Activated naive CD4-positive, alpha-beta T cell treated with anti-CD3 and anti-CD28 coated beads for 36 hours (primary cell): ENCODE measurements at regions of chr5 and their contacts with region 1.

Region 1: DNA sequence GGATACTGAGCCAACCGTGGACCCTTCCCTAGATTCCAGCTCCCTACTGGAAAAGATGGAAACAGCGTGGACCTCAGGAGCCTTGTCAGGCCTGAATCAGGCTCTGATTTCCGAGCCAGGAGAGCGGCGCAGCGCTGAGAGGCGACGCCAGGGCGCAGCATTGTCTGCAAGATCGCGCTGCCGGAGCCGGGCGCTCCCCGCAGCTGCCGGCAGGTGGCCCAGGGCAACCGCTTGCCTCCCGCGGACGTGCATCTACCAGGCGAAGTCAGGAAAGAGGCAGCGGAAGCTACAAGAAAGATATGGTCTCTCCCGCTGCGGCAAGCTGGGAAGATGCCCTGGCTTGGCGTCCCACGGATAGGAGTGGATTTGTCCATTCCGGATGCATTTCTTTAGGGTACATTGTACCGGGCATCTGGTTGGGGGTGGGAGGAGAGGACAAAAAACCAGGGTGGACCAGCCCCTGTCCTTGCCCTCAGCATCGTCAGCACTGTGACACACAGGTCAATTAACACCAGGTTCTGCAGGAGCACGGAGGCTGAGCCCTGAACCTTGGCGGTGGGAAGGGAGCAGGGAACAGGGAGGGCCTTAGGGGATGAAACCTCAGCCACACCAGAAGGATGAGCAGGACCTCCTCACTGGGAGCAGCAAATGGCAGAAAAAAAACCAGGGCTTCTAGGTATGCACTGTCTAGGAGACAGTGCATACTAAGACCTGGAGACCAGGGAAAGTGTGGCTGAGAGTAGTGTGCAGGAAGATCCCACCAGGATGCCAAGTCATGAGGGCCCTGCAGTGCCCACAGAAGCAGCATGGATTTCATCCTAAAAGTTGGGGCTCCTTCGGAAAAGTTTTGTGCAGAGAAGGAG is 55.9 kb downstream of the SFXN1 start:
- DNase-seq: peak; percentile 92
- H3K4me3 Mint-ChIP-seq: peak overlapping the region; percentile 68
- H3K27ac Mint-ChIP-seq: peak overlapping the region; percentile 77
- H3K4me1 Mint-ChIP-seq: peaks cover 54% of the 10 kb centered on the region
- H3K27me3 Mint-ChIP-seq: no peaks in the 10 kb centered on the region

Region 2: DNA sequence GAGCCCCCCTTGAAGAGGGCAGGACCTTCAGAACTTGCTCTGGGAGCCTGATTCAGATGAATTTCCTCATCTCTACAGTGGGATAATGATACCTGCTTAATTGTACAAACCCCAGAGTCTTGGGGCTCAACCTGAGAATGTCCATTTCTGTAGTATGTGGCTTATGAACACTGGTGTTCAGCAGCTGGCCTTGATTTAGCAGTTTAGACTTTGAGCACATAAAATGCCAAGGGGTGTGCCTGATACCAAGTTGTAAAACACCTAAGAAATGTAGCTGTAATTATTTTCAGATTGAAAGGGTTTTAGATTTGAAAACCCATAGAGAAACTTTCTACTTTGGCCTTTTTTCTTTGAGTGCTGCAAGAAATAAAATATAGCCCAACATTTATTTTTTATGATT is 11.0 kb before region 1 on chr5:
- CTCF ChIA-PET with region 1: interaction called, 23 read pairs
- intact Hi-C with region 1: loop called (anchors 1 kb)
- DNase-seq: no peak
- H3K4me3 Mint-ChIP-seq: peak overlapping the region; percentile 91
- H3K27ac Mint-ChIP-seq: peak overlapping the region; percentile 99
- H3K4me1 Mint-ChIP-seq: peaks cover 74% of the 10 kb centered on the region
- H3K27me3 Mint-ChIP-seq: no peaks in the 10 kb centered on the region

Region 3: GRCh38 chr5:175603987-175604739 is 69.9 kb after region 1 on chr5:
- CTCF ChIA-PET with region 1: interaction called, 12 read pairs
- intact Hi-C with region 1: no loop called
- DNase-seq: no peak
- H3K4me3 Mint-ChIP-seq: no peak overlapping the region
- H3K27ac Mint-ChIP-seq: no peak overlapping the region
- H3K4me1 Mint-ChIP-seq: peaks cover 6% of the 10 kb centered on the region
- H3K27me3 Mint-ChIP-seq: no peaks in the 10 kb centered on the region

Region 4: GRCh38 chr5:175689147-175689991 is 155.1 kb after region 1 on chr5:
- CTCF ChIA-PET with region 1: interaction called, 111 read pairs
- intact Hi-C with region 1: no loop called
- DNase-seq: no peak
- H3K4me3 Mint-ChIP-seq: no peak overlapping the region
- H3K27ac Mint-ChIP-seq: no peak overlapping the region
- H3K4me1 Mint-ChIP-seq: peaks cover 54% of the 10 kb centered on the region
- H3K27me3 Mint-ChIP-seq: no peaks in the 10 kb centered on the region

Region 5: GRCh38 chr5:175718401-175719108 is 184.3 kb after region 1 on chr5:
- CTCF ChIA-PET with region 1: interaction called, 77 read pairs
- intact Hi-C with region 1: loop called (anchors 1 kb)
- DNase-seq: peak; percentile 86
- H3K4me3 Mint-ChIP-seq: no peak overlapping the region
- H3K27ac Mint-ChIP-seq: no peak overlapping the region
- H3K4me1 Mint-ChIP-seq: peaks cover 6% of the 10 kb centered on the region
- H3K27me3 Mint-ChIP-seq: no peaks in the 10 kb centered on the region

Region 6: DNA sequence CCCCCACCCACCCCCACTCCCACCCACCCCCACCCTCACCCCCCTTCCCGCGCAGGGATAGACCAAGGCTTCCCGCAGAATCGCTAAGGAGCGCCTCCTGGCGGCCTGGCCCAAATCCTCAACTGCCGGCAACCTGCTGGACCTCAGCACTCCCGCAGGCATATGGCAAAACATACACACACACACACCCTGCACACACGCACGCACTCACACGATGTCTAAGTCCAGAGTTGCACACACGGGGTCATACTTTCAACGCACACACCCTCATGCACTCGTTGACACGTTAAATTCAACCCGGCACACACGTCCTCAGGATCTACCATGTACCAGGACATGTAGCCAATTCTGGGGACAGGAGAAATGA is 338.8 kb after region 1 on chr5:
- CTCF ChIA-PET with region 1: interaction called, 3 read pairs
- intact Hi-C with region 1: loop called (anchors 10 kb)
- DNase-seq: peak; percentile 38
- H3K4me3 Mint-ChIP-seq: no peak overlapping the region
- H3K27ac Mint-ChIP-seq: no peak overlapping the region
- H3K4me1 Mint-ChIP-seq: peaks cover 8% of the 10 kb centered on the region
- H3K27me3 Mint-ChIP-seq: peaks cover 48% of the 10 kb centered on the region